ENCODE measurements at regions of chr5 and their contacts with region 1.

Region 1: GRCh38 chr5:91641730-91642350 is 258.7 kb upstream of the ARRDC3 start:
- DNase-seq: no peak
- H3K4me3 ChIP-seq: no peak overlapping the region
- H3K27ac ChIP-seq: no peak overlapping the region
- H3K4me1 ChIP-seq: peaks cover 0 to 5% (median under 1%) of the 10 kb centered on the region in 4 experiments; a peak in 1 of 7 replicates
- H3K27me3 ChIP-seq: peaks cover 0 to 1% (median 0%) of the 10 kb centered on the region in 4 experiments; a peak in 1 of 7 replicates
- CTCF ChIP-seq: peak in 2 of 3 experiments; percentile 17 to 29; a peak in 2 of 4 replicates
- EP300 ChIP-seq: no peak
- POLR2A ChIP-seq: no peak
- RAD21 ChIP-seq: peak; percentile 60

Region 2: GRCh38 chr5:91928754-91929521 is 287.1 kb after region 1 on chr5:
- CTCF ChIA-PET with region 1: interaction called, 10 read pairs
- POLR2A ChIA-PET with region 1: no interaction called
- DNase-seq: no peak
- H3K4me3 ChIP-seq: no peak overlapping the region
- H3K27ac ChIP-seq: no peak overlapping the region
- H3K4me1 ChIP-seq: no peaks in the 10 kb centered on the region
- H3K27me3 ChIP-seq: no peaks in the 10 kb centered on the region
- CTCF ChIP-seq: peak in 1 of 3 experiments; percentile 36; a peak in 2 of 4 replicates
- EP300 ChIP-seq: no peak
- POLR2A ChIP-seq: no peak
- RAD21 ChIP-seq: peak in 1 of 2 experiments; percentile 47; a peak in 3 of 4 replicates

Region 3: GRCh38 chr5:92222449-92222848 is 580.6 kb after region 1 on chr5:
- CTCF ChIA-PET with region 1: interaction called, 16 read pairs
- POLR2A ChIA-PET with region 1: no interaction called
- DNase-seq: no peak
- H3K4me3 ChIP-seq: no peak overlapping the region
- H3K27ac ChIP-seq: no peak overlapping the region
- H3K4me1 ChIP-seq: no peaks in the 10 kb centered on the region
- H3K27me3 ChIP-seq: no peaks in the 10 kb centered on the region
- CTCF ChIP-seq: peak; percentile 18 to 50 (median 50)
- EP300 ChIP-seq: no peak
- POLR2A ChIP-seq: no peak
- RAD21 ChIP-seq: peak; percentile 75 to 84

Measured in H1 (cell line).